Posterior vena cava (tissue), 2 donors: ENCODE measurements at regions of chr10 and their contacts with region 1.

Region 1: DNA sequence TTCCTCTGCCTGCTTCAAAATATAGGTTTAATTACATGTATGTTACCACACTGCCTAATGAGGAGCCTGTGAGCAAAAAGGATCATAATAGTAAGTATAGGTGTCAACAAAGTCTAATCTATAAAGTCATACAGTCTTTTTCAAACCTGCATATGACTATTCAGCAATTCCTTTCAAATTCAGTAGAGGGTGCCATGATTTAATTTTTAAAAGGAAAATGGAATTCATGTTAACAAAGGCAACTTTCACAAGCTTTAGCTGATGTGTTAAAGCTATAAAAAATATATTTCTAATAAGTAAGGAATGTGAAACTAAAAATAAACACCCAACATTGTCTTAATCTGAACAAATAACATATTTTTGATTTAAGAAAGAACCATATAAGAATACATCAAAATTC is 52.1 kb downstream of the MPP7 start:
- DNase-seq: no peak

Region 2: GRCh38 chr10:28137907-28138880 is 112.6 kb before region 1 on chr10:
- intact Hi-C with region 1: no loop called
- DNase-seq: no peak

Region 3: GRCh38 chr10:28302638-28303488 is 52.1 kb after region 1 on chr10 and contains the start of gene MPP7:
- intact Hi-C with region 1: loop called in 1 of 2 experiments (anchors 5 kb)
- DNase-seq: peak; percentile 99
- total RNA-seq, gene MPP7: 37.1 to 58.6 TPM

Region 4: GRCh38 chr10:28375399-28376369 is 124.9 kb after region 1 on chr10:
- intact Hi-C with region 1: loop called (anchors 5 kb)
- DNase-seq: no peak

Region 5: GRCh38 chr10:28381903-28382347 is 131.1 kb after region 1 on chr10:
- intact Hi-C with region 1: loop called (anchors 5 kb)
- DNase-seq: peak; percentile 90